ENCODE measurements at regions of chr16 and their contacts with region 1.

Region 1: GRCh38 chr16:24694931-24695330 is 34.5 kb upstream of the TNRC6A start:
- DNase-seq: no peak
- H3K4me3 ChIP-seq: no peak overlapping the region
- H3K27ac ChIP-seq: no peak overlapping the region
- H3K4me1 ChIP-seq: no peaks in the 10 kb centered on the region
- H3K27me3 ChIP-seq: no peaks in the 10 kb centered on the region
- CTCF ChIP-seq: no peak
- POLR2A ChIP-seq: no peak

Region 2: GRCh38 chr16:24580665-24581064 is 114.3 kb before region 1 on chr16:
- intact Hi-C with region 1: loop called (anchors 10 kb)
- DNase-seq: no peak
- H3K4me3 ChIP-seq: no peak overlapping the region
- H3K27ac ChIP-seq: no peak overlapping the region
- H3K4me1 ChIP-seq: peaks cover 0 to 5% of the 10 kb centered on the region in 2 donors
- H3K27me3 ChIP-seq: no peaks in the 10 kb centered on the region
- CTCF ChIP-seq: peak; percentile 7 to 56 (median 48)
- POLR2A ChIP-seq: no peak

Region 3: GRCh38 chr16:24758373-24758772 is 63.4 kb after region 1 on chr16:
- intact Hi-C with region 1: no loop called
- DNase-seq: no peak
- H3K4me3 ChIP-seq: no peak overlapping the region
- H3K27ac ChIP-seq: no peak overlapping the region
- H3K4me1 ChIP-seq: peaks cover 34 to 79% of the 10 kb centered on the region in 2 donors
- H3K27me3 ChIP-seq: no peaks in the 10 kb centered on the region
- CTCF ChIP-seq: no peak
- POLR2A ChIP-seq: no peak

Measured in adrenal gland (tissue), 19 donors.